MCF 10A (cell line): ENCODE measurements at regions of chr15 and their contacts with region 1.

Region 1: DNA sequence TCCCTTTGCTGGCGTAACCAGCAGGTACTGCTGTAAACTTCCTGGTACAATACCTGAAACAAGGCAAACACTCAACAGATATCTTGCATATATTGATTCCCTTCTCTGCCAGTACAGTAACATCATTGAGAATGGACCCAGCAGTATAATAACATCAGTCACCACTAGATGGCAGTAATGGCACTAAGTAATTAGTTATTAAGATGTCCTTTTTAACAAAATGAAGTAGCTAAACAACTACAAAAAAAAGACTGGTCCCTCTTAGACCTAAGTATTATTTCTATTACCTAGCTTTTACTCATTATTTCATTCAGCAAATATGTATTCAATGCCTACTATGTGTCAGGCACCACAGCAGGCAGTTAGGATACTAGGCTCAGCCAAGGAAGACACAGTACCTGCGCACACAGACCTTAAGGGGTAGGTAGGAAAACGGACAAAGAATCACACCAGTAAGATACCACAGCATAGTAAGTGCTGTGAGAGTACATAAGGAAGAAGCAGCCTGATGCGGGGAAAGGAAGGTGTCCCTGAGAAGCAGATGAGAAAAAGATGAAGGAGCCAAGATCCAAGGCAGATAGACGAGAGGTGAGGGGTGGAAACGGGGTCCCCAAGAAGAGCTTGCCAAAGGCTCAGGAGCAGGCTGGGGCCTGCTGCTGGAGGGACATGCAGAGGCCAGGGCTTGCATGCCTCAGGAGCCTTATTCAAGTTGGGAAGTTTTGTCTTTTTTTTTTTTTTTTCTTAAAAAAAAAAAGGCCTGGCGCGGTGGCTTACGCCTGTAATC is 102.8 kb upstream of the CHD2 start:
- DNase-seq: peak; percentile 76
- H3K4me3 Mint-ChIP-seq: no peak overlapping the region
- H3K27ac Mint-ChIP-seq: peak overlapping the region; percentile 84
- H3K4me1 Mint-ChIP-seq: peaks cover 18% of the 10 kb centered on the region
- H3K27me3 Mint-ChIP-seq: no peaks in the 10 kb centered on the region
- CTCF ChIP-seq: peak; percentile 53

Region 2: DNA sequence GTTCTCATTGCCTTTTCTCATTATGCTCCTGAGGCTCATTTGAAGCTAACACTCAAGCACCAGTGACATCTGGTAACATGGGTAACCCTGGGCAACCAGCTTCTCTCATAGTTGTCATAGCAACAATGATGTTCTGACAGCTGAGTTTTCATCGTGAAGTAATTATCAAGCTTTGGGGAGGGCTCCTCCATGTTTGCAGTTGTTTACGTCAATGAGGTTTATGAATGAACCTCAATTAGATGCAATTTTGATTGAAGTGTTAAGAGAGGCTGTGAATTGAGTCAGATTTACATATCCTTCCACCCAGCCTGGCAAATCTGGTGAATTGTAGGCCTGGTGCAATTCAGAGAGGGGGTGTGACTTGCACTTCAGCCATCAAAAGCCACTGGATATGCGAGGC is 16.5 kb before region 1 on chr15:
- CTCF ChIA-PET with region 1: interaction called, 18 read pairs
- POLR2A ChIA-PET with region 1: no interaction called
- intact Hi-C with region 1: no loop called
- DNase-seq: no peak
- H3K4me3 Mint-ChIP-seq: no peak overlapping the region
- H3K27ac Mint-ChIP-seq: no peak overlapping the region
- H3K4me1 Mint-ChIP-seq: no peaks in the 10 kb centered on the region
- H3K27me3 Mint-ChIP-seq: no peaks in the 10 kb centered on the region
- CTCF ChIP-seq: no peak

Region 3: DNA sequence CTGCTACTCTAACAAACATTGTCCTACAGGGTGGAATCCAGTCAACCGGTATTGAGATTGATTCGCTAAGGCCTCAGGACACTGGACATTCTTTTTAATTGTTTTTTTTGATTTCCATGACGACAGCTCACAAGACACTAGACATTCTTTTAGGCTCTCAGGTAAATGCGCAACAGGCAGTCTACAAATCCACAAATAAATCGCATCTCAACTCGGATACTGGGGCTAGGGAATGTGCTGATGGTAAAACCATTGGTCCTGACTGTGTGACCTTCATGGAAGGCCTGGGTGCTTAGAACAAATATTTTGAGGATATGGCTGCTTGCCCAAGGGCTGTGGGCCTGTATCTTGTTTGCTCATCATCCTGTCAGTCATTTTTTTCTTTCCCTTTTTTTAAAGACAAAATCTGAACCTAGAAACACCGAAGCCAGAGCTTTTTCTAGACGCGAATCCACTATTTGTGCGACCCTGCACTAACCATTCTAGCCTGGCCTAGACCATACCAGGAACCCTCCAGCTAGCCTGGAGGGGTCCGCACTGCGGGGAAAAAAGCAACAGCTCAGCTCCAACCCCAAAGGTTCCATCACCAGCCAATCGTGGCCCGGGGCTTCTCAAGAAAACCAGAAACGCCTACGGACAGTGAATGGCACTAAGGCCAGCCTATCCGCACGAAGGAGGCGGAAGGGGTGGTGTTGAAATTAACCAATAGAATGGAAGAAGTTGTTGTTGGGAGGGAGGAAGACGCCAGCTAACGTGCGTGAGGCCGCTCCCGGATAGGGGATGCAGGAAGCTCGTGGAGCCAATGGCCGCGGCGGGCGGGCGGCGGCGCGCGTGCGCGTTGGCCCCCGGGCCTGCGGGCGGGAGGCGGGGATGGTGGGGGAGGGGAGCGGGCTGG is 84.7 kb after region 1 on chr15:
- CTCF ChIA-PET with region 1: interaction called, 4 read pairs
- POLR2A ChIA-PET with region 1: interaction called, 1,025 read pairs
- intact Hi-C with region 1: no loop called
- DNase-seq: peak; percentile 99
- H3K4me3 Mint-ChIP-seq: peak overlapping the region; percentile 87
- H3K27ac Mint-ChIP-seq: peak overlapping the region; percentile 98
- H3K4me1 Mint-ChIP-seq: peaks cover 28% of the 10 kb centered on the region
- H3K27me3 Mint-ChIP-seq: no peaks in the 10 kb centered on the region
- CTCF ChIP-seq: no peak

Region 4: GRCh38 chr15:92924216-92924615 is 126.9 kb after region 1 on chr15:
- CTCF ChIA-PET with region 1: interaction called, 53 read pairs
- POLR2A ChIA-PET with region 1: interaction called, 125 read pairs
- intact Hi-C with region 1: no loop called
- DNase-seq: no peak
- H3K4me3 Mint-ChIP-seq: no peak overlapping the region
- H3K27ac Mint-ChIP-seq: peak overlapping the region; percentile 93
- H3K4me1 Mint-ChIP-seq: peaks cover 39% of the 10 kb centered on the region
- H3K27me3 Mint-ChIP-seq: no peaks in the 10 kb centered on the region
- CTCF ChIP-seq: no peak

Region 5: GRCh38 chr15:92930054-92930621 is 132.8 kb after region 1 on chr15:
- CTCF ChIA-PET with region 1: interaction called, 30 read pairs
- POLR2A ChIA-PET with region 1: interaction called, 3 read pairs
- intact Hi-C with region 1: no loop called
- DNase-seq: no peak
- H3K4me3 Mint-ChIP-seq: no peak overlapping the region
- H3K27ac Mint-ChIP-seq: peak overlapping the region; percentile 57
- H3K4me1 Mint-ChIP-seq: peaks cover 16% of the 10 kb centered on the region
- H3K27me3 Mint-ChIP-seq: no peaks in the 10 kb centered on the region
- CTCF ChIP-seq: no peak

Region 6: GRCh38 chr15:93566762-93567161 is 769.4 kb after region 1 on chr15:
- CTCF ChIA-PET with region 1: no interaction called
- POLR2A ChIA-PET with region 1: no interaction called
- intact Hi-C with region 1: loop called (anchors 5 kb)
- DNase-seq: peak; percentile 68
- H3K4me3 Mint-ChIP-seq: no peak overlapping the region
- H3K27ac Mint-ChIP-seq: peak overlapping the region; percentile 16
- H3K4me1 Mint-ChIP-seq: peaks cover 10% of the 10 kb centered on the region
- H3K27me3 Mint-ChIP-seq: no peaks in the 10 kb centered on the region
- CTCF ChIP-seq: no peak